Left cardiac atrium (tissue), 4 donors: ENCODE measurements at regions of chr7 and their contacts with region 1.

Region 1: DNA sequence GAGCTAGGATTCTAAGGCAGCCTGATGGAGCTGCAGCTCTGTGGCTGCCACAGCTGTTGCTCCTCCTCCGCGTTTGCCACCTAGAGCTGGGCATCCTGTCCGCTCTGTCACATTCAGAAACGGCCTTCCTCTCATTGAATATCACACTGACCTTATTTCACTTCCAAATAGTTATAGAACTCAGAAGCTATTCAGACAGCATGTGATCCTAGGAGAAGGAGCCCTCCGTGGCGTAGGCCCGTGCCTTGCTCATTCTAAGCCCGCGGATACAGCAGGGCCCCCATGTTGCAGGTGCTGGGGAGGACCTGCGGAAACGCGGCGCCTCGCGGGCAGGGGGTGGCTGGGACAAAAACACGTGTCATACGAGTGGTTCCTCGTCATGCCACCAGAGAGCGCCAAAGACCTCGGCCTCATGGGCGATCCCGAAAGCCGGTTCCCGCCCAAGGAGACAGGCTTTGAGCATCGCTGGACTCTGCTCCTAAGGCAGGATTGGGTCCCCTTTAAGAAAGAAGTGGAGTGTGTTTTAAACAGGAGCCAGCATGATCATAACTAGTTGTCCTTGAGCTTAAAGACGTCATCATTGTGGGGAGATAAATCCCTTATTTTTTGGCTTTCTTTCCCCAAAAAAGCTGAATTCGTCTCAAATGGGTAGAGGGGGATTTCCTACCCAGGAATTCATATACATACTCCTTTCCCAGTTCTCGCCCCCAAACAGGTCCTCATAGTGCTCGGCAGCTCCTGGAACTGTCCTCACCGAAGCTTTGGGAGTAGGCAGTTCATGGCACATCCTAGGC is 17.9 kb upstream of the FIGNL1 start:
- DNase-seq: peak; percentile 87
- ATAC-seq: peak; percentile 92

Region 2: GRCh38 chr7:50595491-50596102 is 127.6 kb after region 1 on chr7:
- intact Hi-C with region 1: loop called (anchors 5 to 10 kb)
- DNase-seq: peak; percentile 40
- ATAC-seq: peak; percentile 46 to 73

Region 3: GRCh38 chr7:50679218-50680007 is 211.4 kb after region 1 on chr7:
- intact Hi-C with region 1: loop called in 1 of 2 experiments (anchors 2 kb)
- DNase-seq: no peak
- ATAC-seq: peak; percentile 60 to 82

Region 4: DNA sequence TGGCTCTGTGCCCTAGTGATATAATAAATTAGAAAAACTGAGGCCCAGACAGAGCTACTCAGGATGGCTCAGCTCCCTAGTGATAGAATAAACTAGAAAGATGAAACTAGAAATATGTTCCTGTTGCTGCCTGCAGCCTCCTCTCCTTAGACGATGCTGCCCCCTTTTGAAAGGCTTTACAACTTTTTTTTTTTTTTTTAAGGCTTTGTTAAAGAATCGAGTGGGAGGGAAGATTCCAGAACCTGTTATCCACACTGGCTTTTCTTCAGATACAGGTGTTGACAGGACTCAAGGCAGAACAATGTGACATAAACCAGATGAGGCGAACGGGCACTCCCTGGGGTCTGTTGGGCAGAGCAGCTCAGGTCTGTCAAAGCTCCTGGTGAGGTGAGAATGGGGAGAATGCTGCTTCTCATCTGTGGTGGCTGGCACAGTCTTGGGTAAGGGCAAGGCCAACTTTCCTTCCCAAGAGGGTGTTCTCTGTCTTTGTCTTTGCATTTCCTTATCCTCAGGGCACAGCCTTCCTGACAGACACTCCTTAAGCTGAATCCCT is 673.5 kb after region 1 on chr7:
- intact Hi-C with region 1: loop called (anchors 5 kb)
- DNase-seq: no peak
- ATAC-seq: peak; percentile 50 to 78

Region 5: GRCh38 chr7:51162724-51163329 is 694.8 kb after region 1 on chr7:
- intact Hi-C with region 1: loop called in 1 of 2 experiments (anchors 2 kb)
- DNase-seq: peak; percentile 73
- ATAC-seq: peak; percentile 53 to 94

Region 6: GRCh38 chr7:51366930-51367613 is 899.1 kb after region 1 on chr7:
- intact Hi-C with region 1: loop called in 1 of 2 experiments (anchors 10 kb)
- DNase-seq: no peak
- ATAC-seq: peak; percentile 88 to 90